ENCODE measurements at regions of chrX and their contacts with region 1.

Region 1: DNA sequence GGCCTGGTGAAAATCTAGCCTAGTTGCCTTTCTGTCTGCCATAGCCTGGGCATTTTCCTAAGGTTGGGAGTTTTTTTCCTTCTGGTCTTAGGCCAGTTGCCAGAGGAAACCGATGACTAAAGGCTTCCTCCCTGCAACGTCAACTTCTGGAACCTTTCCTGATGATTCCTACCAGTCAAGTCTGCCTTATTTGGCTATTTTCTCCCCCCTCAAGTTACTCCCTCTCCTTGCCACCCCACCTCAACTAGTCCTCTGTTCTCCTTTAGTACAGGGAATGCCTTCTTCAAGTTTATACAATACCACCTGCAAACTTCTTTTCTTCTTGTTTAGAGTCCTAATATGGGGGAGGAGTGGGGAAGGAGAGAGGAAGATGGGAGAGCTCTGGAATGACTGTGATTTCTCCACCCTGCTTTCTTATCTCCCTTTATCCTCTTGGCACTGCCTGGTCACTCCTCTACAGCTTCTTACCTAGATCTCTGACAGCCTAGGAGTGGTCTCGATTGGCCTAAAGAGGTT is 10.6 kb downstream of the MSN start:
- DNase-seq: no peak

Region 2: DNA sequence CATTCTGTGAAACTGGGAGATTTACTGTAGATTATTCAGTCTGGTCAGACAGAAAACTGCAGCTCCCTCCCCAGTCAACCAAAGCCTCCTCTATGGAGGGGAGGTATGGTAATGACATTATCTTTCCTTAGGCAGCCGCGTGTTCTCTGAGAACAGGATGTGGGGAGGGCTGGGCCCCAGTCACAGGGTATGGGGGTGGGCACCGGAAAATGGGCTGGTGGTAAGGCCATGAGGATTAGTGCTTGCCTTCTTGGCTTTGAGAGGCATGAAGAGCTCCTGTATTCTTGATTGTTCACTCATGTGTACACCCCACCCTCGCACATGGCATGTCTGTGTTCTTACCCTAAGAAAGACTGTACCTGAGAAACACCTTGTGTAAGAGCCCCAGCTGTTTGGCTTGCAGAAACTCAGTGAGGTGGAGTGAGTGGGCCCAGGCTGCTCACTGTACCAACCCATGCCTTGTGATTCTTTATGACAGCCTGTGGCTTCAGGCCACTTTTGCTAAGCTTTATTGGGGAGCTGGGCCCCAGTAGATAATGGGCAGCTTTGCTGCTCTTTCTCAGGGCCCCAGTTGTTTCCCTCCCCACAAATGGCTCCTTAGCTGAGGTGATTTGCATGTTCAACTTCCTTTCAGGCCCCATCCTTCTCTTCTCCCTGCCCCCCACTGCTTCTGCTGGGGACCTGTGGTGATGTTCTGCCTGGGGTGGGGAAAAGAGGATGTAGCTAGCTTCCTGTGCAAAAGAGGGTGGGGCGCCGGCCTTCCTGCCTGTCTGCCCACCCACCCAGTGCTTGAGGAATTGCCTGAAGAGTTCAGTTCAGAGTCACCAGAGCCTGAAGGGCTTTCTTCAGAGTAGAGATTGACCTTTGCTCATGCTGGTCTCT is 20.1 kb after region 1 on chrX:
- intact Hi-C with region 1: loop called (anchors 1 kb)
- DNase-seq: peak; percentile 86

Region 3: GRCh38 chrX:65706041-65706828 is 28.2 kb after region 1 on chrX:
- intact Hi-C with region 1: loop called (anchors 5 kb)
- DNase-seq: no peak

Region 4: DNA sequence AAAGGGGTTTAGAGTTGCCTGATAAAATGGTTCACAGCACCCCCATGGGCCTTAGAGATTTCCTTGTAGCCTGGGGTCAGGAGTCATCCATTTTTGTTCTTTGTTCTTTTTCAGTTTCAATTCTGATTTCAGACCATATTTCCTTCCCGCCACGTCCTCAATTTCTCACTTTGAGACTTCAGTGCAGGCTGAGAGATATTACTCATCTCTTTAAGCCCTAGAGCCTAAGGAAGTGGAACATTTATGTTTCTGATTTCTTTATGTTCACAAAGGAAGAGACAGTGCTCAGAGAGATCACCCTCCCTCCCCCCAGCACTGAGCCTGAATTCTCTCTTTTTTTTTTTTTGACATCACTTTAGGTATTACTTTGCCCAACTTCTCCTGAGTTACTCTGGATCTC is 45.7 kb after region 1 on chrX:
- intact Hi-C with region 1: no loop called
- DNase-seq: no peak